H1 (cell line): ENCODE measurements at regions of chr16 and their contacts with region 1.

Region 1: GRCh38 chr16:9047686-9048301 is 43.6 kb upstream of the HAPSTR1 start:
- DNase-seq: peak; percentile 50 to 73
- H3K4me3 ChIP-seq: no peak overlapping the region
- H3K27ac ChIP-seq: peak overlapping the region; percentile 23; the same call in 1 of the 2 replicates
- H3K4me1 ChIP-seq: peaks cover 5 to 14% (median 10%) of the 10 kb centered on the region in 4 experiments
- H3K27me3 ChIP-seq: no peaks in the 10 kb centered on the region
- CTCF ChIP-seq: no peak
- EP300 ChIP-seq: no peak
- POLR2A ChIP-seq: no peak
- RAD21 ChIP-seq: no peak

Region 2: DNA sequence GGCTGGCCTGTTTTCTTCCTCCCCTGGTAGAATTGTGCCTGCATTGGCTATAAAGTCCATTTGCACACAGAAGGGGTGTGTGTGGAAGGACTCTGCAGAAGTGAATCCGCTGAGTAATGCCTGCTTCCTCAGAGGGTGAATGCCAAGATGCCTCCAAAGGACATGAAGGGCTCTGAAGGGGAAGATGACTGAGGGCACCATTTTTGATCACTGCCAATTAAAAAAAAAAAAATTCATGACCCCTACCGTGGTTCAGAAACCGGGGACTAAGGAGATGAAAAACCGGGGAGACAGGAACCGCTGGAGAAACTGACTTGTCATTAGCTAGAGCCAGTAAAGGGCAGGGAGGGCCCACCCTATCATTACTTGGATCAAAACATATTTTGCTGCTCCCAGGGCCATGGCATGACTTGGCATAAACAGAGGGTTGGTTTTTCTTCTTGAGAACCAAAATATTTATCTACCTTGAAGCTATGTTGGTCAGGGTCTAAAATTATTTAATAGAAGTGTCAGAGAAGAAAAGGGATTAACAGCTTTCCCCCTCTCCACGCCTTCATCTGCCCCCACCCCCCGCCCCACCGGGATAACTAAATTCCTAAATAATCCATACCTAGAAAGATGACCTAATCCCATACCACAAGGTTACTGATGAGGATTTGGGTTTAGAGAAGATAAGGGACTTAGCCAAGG is 80.5 kb before region 1 on chr16:
- CTCF ChIA-PET with region 1: no interaction called
- POLR2A ChIA-PET with region 1: no interaction called
- DNase-seq: no peak
- H3K4me3 ChIP-seq: 0 out of 8 replicates have a peak overlapping the region, but pooled peaks of 1 of the 4 experiments have one; percentile 2
- H3K27ac ChIP-seq: no peak overlapping the region
- H3K4me1 ChIP-seq: peaks cover 8 to 18% (median 12%) of the 10 kb centered on the region in 4 experiments
- H3K27me3 ChIP-seq: peaks cover 0 to 7% (median 2%) of the 10 kb centered on the region in 4 experiments; a peak in 3 of 7 replicates
- CTCF ChIP-seq: no peak
- EP300 ChIP-seq: no peak
- POLR2A ChIP-seq: no peak
- RAD21 ChIP-seq: no peak

Region 3: DNA sequence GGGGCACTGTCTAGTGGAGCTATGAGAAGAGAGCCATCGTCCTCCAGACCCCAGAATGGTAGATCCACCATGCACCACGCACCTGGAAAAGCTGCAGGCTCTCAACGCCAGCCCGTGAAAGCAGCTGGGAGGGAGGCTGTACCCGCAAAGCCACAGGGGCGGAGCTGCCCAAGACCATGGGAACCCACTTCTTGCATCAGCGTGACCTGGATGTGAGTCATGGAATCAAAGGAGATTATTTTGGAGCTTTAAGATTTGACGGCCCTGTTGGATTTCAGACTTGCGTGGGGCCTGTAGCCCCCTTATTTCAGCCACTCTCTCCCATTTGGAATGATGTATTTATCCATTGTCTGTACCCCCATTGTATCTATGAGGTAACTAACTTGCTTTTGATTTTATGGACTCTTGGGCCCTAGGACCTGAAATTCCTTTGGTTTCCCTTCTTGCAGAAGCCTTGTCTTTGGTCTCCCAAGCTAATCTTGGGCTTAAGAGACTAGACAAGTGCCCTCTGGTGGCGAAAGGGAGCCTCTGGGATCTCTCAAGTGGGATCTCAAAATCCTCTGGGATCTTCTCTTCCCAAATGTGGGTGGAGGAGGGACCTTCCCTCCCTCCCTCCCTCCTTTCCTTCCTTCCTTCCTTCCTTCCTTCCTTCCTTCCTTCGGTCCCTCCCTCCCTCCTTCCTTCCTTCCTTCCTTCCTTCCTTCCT is 14.5 kb before region 1 on chr16:
- CTCF ChIA-PET with region 1: interaction called, 54 read pairs
- POLR2A ChIA-PET with region 1: interaction called, 8 read pairs
- DNase-seq: peak in 1 of 2 experiments; percentile 70
- H3K4me3 ChIP-seq: no peak overlapping the region
- H3K27ac ChIP-seq: no peak overlapping the region
- H3K4me1 ChIP-seq: no peaks in the 10 kb centered on the region
- H3K27me3 ChIP-seq: no peaks in the 10 kb centered on the region
- CTCF ChIP-seq: peak; percentile 33 to 77 (median 72)
- EP300 ChIP-seq: no peak
- POLR2A ChIP-seq: no peak
- RAD21 ChIP-seq: peak; percentile 56 to 66

Region 4: DNA sequence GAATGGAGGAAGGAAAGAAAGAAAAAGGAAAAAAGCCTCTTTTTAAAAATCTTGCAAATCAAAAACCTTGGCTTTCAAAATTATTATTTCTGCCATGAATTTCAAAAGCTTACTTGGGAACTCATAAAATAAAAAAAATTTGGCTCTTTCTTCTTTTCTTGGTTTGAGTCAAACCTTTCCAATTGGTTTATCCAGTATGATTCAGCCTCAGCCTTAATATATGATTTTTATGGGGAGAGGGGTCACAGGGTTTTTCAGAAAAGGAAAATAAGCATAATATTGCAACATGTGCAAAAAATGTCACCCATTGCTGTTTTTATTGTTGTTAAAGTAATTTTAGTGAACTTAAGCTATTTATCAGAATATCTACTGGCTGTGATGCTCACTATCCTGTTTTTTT is 12.4 kb after region 1 on chr16:
- CTCF ChIA-PET with region 1: interaction called, 13 read pairs
- POLR2A ChIA-PET with region 1: no interaction called
- DNase-seq: no peak
- H3K4me3 ChIP-seq: no peak overlapping the region
- H3K27ac ChIP-seq: no peak overlapping the region
- H3K4me1 ChIP-seq: no peaks in the 10 kb centered on the region
- H3K27me3 ChIP-seq: no peaks in the 10 kb centered on the region
- CTCF ChIP-seq: no peak
- EP300 ChIP-seq: no peak
- POLR2A ChIP-seq: no peak
- RAD21 ChIP-seq: no peak